Activated CD4-positive, alpha-beta T cell treated with anti-CD3 and anti-CD28 coated beads, Interleukin-2, amount 10 ng/mL, durations not matched to agents 24 days and 14 days (primary cell): ENCODE measurements at regions of chr16 and their contacts with region 1.

Region 1: DNA sequence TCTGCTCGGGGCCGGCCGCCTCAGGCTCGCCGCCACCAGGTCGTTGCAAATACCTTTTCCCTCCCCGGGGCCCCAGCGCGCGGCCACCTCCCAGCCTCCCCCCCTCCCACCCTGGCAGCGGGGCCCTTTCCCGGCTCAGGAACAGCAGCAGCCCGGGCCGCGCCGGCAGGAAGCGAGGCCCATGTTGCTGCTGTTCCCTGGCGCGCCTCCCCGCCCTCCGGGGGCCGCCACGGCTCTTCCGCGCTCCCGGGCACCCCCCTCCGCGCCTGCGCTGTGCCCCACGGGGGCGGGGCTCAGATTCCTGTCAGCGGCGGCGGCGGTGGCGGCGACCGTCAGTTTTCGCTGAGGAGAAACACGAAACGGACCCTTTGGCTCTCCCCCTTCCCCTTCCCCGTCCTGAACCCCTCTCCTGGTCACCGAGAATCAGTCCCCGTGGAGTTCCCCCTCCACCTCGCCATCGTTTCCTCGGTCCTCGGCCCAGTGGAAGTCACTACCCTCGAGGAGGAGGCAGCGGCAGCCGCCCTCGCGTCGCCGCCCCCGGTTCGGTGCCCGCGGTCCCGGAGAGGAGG is at the start of gene NFAT5:
- DNase-seq: peak; percentile 98
- H3K4me3 Mint-ChIP-seq: peak within 1 kb of the TSS; percentile 99
- H3K27ac Mint-ChIP-seq: peak within 1 kb of the TSS; percentile 99
- H3K4me1 Mint-ChIP-seq: peaks cover 42% of the 10 kb centered on the region
- H3K27me3 Mint-ChIP-seq: no peaks in the 10 kb centered on the region
- total RNA-seq, gene NFAT5: 46.3 and 54.6 TPM in 2 replicates

Region 2: DNA sequence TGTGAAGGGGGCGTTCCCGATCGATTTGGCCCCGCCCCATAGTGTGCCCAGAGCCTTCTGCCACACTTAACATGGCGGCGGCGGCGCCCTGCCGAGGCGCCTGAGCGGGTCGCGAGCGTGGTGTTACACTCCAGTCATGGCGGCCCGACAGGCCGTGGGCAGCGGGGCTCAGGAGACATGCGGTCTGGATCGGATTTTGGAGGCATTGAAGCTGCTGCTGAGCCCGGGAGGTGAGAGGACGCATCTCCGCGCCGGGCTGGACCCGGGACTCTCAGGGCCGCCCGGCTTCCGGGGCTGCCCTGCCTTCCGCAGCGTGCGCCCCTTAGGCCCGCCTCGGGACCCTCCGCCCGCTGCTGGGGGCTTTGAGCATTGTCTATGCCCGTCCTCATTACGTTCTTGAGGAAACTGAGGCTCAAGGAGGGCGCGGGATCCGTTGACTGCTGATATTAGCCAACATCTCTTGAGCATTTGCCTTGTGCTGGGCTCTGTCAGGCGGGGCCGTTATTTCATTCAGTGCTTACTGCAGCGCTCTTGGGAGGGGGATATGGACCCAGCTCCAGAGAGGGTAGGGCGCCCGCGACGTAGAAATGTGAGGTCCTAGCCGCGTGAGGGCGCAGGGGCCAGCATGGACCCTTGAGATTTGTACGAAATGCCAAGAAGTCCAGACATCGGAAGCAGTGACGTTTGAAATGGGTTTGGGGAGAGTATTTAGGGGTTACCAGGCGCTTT is 722.1 kb before region 1 on chr16 and contains the start of gene TANGO6:
- intact Hi-C with region 1: loop called (anchors 10 kb)
- DNase-seq: peak; percentile 97
- H3K4me3 Mint-ChIP-seq: peak within 1 kb of the TSS; percentile 87
- H3K27ac Mint-ChIP-seq: peak within 1 kb of the TSS; percentile 95
- H3K4me1 Mint-ChIP-seq: peaks cover 20% of the 10 kb centered on the region
- H3K27me3 Mint-ChIP-seq: no peaks in the 10 kb centered on the region
- total RNA-seq, gene TANGO6: 35.6 and 40.0 TPM in 2 replicates

Region 3: DNA sequence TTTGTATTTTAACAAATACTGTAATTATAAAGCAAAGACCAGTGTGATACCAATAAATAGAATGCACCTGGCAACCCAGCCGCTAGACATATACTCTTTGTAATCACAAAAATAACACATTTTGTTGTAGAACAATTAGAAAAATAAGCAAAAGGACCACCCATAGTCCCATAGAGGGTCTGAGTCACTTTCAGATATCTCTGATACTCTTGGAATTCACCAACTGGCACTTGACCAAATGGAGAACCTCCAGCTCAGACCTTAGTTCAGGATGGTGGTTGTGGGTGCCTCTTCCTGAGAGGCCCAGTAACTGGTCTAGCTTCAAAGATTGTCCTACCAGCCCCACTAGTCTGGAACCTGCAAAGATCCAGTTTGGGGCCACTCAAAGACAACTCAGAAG is 179.2 kb before region 1 on chr16:
- intact Hi-C with region 1: loop called (anchors 1 kb)
- DNase-seq: no peak
- H3K4me3 Mint-ChIP-seq: no peak overlapping the region
- H3K27ac Mint-ChIP-seq: peak overlapping the region; percentile 87
- H3K4me1 Mint-ChIP-seq: peaks cover 21% of the 10 kb centered on the region
- H3K27me3 Mint-ChIP-seq: no peaks in the 10 kb centered on the region

Region 4: GRCh38 chr16:69424053-69424934 is 141.5 kb before region 1 on chr16 and contains the start of gene CYB5B:
- intact Hi-C with region 1: loop called (anchors 1 kb)
- DNase-seq: peak; percentile 98
- H3K4me3 Mint-ChIP-seq: peak within 1 kb of the TSS; percentile 100
- H3K27ac Mint-ChIP-seq: peak within 1 kb of the TSS; percentile 97
- H3K4me1 Mint-ChIP-seq: peaks cover 33% of the 10 kb centered on the region
- H3K27me3 Mint-ChIP-seq: no peaks in the 10 kb centered on the region
- total RNA-seq, gene CYB5B: 154 and 166 TPM in 2 replicates

Region 5: GRCh38 chr16:69520800-69521602 is 44.8 kb before region 1 on chr16:
- intact Hi-C with region 1: loop called (anchors 2 kb)
- DNase-seq: peak; percentile 69
- H3K4me3 Mint-ChIP-seq: peak overlapping the region; percentile 26
- H3K27ac Mint-ChIP-seq: peak overlapping the region; percentile 84
- H3K4me1 Mint-ChIP-seq: peaks cover 21% of the 10 kb centered on the region
- H3K27me3 Mint-ChIP-seq: no peaks in the 10 kb centered on the region

Region 6: DNA sequence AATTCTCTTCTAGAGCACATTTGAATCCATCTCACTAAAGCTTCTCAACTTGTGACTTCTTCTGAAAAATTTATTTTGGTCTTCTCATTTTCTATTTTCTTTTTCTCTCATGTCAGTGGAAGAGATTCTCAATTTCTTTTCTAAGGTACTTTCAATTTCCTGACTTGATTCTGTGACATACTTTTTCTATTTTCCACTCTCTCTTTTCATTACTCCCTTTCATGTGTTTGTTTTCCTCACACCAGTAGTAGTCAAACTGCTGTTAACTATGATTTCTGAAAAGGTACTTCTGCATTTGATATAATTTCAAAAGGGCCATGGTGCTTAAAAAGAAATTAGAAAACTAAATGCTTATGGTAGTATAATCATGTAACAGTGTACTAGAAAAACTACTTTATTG is 41.9 kb after region 1 on chr16:
- intact Hi-C with region 1: loop called (anchors 2 kb)
- DNase-seq: no peak
- H3K4me3 Mint-ChIP-seq: peak overlapping the region; percentile 49
- H3K27ac Mint-ChIP-seq: peak overlapping the region; percentile 93
- H3K4me1 Mint-ChIP-seq: peaks cover 26% of the 10 kb centered on the region
- H3K27me3 Mint-ChIP-seq: no peaks in the 10 kb centered on the region

Region 7: GRCh38 chr16:69741919-69742904 is 176.5 kb after region 1 on chr16:
- intact Hi-C with region 1: no loop called
- DNase-seq: no peak
- H3K4me3 Mint-ChIP-seq: no peak overlapping the region
- H3K27ac Mint-ChIP-seq: no peak overlapping the region
- H3K4me1 Mint-ChIP-seq: peaks cover 4% of the 10 kb centered on the region
- H3K27me3 Mint-ChIP-seq: no peaks in the 10 kb centered on the region